Kidney (tissue), 22 donors: ENCODE measurements at regions of chr11 and their contacts with region 1.

Region 1: GRCh38 chr11:77086521-77087472 is 15.8 kb upstream of the OMP start:
- DNase-seq: peak in 1 of 5 donors; percentile 55
- H3K4me3 ChIP-seq: no peak overlapping the region
- H3K27ac ChIP-seq: peak overlapping the region; percentile 34 to 86
- H3K4me1 ChIP-seq: peaks cover 0 to 30% (median 24%) of the 10 kb centered on the region in 3 donors
- H3K27me3 ChIP-seq: no peaks in the 10 kb centered on the region
- CTCF ChIP-seq: no peak

Region 2: GRCh38 chr11:77053217-77054015 is 33.4 kb before region 1 on chr11:
- intact Hi-C with region 1: loop called (anchors 5 kb)
- DNase-seq: peak in 1 of 5 donors; percentile 16
- H3K4me3 ChIP-seq: no peak overlapping the region
- H3K27ac ChIP-seq: no peak overlapping the region
- H3K4me1 ChIP-seq: no peaks in the 10 kb centered on the region
- H3K27me3 ChIP-seq: no peaks in the 10 kb centered on the region
- CTCF ChIP-seq: no peak